Sciatic nerve (tissue), 2 donors: ENCODE measurements at regions of chr4 and their contacts with region 1.

Region 1: DNA sequence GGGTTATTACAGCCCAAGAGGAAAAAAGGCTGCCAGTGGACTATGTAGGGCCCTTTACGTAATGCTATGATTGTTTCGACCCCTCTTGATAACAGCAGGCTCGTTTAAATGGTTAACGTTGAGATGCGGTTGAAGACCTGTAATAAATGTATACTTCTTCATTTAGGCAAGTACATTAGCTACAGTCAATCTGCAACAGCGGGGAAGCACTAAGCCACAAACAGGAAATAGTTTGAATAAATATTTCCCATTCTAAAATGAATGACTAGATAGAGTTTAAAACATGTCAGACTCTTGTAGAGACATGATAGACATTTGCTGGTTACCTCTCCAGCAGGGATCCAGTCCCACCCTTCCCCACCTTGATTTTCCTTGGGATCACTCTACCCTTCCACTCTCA is 38.1 kb upstream of the STIM2 start:
- DNase-seq: no peak
- ATAC-seq: no peak

Region 2: DNA sequence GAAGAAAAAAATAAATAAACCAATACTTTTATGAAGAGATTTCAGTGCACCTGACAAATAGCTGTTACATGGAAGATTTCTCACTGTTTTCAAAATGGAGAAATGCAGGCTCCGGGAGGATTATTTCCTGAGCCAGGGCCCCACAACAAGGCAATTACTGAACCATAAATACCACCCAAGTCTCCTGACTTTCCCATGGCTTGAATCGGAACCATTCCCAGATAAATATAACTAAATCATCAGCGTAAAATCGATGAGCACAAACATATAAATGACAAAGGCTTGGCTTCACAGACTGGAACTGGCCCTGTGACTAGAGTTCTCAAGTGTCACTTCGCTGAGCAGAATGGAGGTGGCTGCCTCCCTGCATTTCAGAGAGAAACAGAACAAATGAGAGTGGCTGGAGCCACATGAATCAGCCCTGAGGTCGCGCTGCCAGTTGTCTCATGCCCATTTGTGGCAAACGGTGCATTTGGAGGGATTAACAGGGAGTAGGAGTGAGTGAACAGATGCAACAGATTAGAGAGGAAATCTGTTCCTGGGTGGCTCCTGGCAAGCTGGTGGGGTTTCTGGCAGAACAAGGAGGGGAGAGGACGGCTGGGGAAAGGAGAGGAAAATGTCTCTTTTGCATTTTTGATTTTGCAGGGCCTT is 19.2 kb before region 1 on chr4:
- intact Hi-C with region 1: no loop called
- DNase-seq: no peak
- ATAC-seq: peak; percentile 28

Region 3: DNA sequence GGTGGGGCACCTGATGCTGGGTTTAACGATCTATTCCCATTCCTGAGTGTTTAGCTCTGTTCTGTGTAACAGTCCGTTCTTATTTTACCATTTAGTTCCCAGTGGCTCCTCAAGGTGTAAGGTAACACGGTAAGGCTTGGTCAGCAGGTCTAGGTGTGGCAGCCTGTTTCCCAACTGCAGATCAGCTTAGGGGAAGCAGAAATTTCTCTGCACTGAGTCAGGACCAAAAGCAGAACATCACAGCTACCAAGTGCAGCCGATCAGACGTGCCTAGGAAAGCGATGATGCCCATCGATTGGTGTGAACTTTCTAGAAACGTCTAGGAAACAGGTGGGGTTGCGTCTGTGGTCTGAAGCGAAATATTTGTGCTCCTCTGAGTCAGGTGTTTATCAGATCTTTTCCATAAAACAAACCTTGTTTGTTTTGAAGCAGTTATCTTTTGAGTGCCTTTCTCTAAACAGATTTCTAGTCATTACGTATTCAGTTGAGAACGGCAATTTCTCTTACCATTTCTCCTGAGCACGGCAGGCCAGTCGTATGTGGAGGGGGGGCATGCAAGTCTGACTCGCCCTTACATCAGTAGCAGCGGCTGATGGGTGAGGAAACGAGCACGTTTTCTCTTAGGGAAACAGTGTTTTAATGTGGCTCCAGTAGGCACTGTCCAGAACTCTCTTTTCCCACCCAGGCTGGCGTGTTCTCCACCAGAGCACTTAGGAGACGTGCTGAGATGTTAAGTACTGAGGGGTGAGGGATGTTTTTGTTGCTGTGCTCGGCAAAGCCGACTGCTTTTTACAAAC is 278.4 kb after region 1 on chr4:
- intact Hi-C with region 1: loop called (anchors 5 kb)
- DNase-seq: no peak
- ATAC-seq: no peak